ENCODE measurements at regions of chr17 and their contacts with region 1.

Region 1: GRCh38 chr17:69414408-69415274 is at the start of gene MAP2K6:
- DNase-seq: peak; percentile 65
- ATAC-seq: peak; percentile 90
- H3K4me3 ChIP-seq: peak within 1 kb of the TSS; percentile 51
- H3K27ac ChIP-seq: peak within 1 kb of the TSS; percentile 36
- H3K4me1 ChIP-seq: 0 out of 2 replicates have a peak, but pooled peaks cover 2% of the 10 kb centered on the region
- H3K27me3 ChIP-seq: no peaks in the 10 kb centered on the region
- CTCF ChIP-seq: no peak
- POLR2A ChIP-seq: no peak
- RAD21 ChIP-seq: no peak
- total RNA-seq, gene MAP2K6: 3.6 and 5.7 TPM in 2 replicates

Region 2: GRCh38 chr17:69473841-69474831 is 59.5 kb after region 1 on chr17:
- CTCF ChIA-PET with region 1: no interaction called
- POLR2A ChIA-PET with region 1: no interaction called
- dilution Hi-C with region 1: no loop called
- in situ Hi-C with region 1: no loop called
- intact Hi-C with region 1: loop called (anchors 5 kb)
- DNase-seq: peak; percentile 72
- ATAC-seq: peak; percentile 90
- H3K4me3 ChIP-seq: no peak overlapping the region
- H3K27ac ChIP-seq: no peak overlapping the region
- H3K4me1 ChIP-seq: peaks cover 3% of the 10 kb centered on the region; the same call in 1 of the 2 replicates
- H3K27me3 ChIP-seq: no peaks in the 10 kb centered on the region
- CTCF ChIP-seq: no peak
- POLR2A ChIP-seq: no peak
- RAD21 ChIP-seq: no peak

Region 3: DNA sequence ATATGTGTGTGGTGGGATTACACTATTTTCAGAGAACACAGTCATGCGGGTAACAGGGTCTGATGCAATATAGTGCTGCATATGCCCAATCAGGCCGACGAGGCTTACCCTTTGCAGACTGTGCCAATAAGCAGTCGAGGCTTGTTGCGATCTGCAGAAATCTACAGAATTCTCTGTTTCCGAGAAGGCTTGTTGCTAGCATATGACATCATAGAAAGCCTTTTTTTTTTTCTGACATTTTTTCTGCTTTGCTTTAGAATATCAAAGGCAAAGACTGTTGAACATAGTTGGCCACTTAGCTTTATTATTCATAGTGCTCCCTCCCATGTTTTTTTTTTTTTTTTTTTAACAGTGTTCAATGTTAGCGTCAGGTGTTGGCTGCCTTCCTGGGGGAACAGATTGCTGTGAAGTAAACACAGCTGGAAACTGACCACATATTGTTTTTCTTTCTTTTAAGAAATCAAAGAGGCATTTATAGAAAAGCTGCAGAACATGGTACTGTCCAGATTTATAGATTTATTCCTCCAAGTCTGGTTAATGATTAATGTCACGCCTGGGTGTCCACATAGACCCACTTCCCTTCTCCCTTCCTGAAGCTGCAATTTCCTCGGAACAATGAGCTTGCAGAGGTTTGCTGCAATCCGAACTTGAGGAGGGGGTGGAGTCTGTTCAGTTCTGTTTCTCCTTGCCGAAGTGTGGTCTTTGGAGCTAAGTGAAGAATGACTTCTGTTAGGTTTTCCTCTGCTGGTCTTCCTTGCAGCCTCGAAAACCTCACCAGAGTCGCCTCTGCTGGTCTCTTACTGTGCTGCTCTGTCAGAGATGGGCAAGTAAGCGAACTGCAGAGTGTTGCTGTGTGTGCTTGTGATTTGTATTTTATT is 87.2 kb after region 1 on chr17:
- CTCF ChIA-PET with region 1: no interaction called
- POLR2A ChIA-PET with region 1: no interaction called
- dilution Hi-C with region 1: no loop called
- in situ Hi-C with region 1: no loop called
- intact Hi-C with region 1: loop called (anchors 5 kb)
- DNase-seq: peak; percentile 90
- ATAC-seq: peak; percentile 72
- H3K4me3 ChIP-seq: peak overlapping the region; percentile 2; the same call in 1 of the 2 replicates
- H3K27ac ChIP-seq: peak overlapping the region; percentile 71; the same call in 1 of the 2 replicates
- H3K4me1 ChIP-seq: peaks cover 8% of the 10 kb centered on the region; the same call in 1 of the 2 replicates
- H3K27me3 ChIP-seq: no peaks in the 10 kb centered on the region
- CTCF ChIP-seq: no peak
- POLR2A ChIP-seq: no peak
- RAD21 ChIP-seq: no peak

Region 4: DNA sequence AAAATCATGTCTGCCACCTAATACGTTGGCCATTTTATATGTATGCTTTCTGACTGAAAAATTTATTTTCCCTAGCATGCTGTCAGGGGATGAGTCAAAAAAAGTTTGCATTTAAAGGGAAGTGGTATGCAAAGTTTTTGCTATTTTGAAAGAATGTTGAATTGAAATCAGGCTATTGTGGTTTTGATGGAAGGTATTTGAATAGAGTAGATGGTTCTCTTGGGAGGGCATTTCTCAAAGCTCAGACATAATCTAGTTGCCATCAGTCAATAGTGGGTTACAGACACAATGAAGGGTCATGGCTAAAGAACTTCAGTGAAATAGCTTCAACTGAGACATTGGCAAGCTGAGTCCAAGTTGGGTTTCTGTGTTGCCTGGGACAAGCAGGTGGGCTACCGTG is 102.3 kb after region 1 on chr17:
- CTCF ChIA-PET with region 1: no interaction called
- POLR2A ChIA-PET with region 1: no interaction called
- dilution Hi-C with region 1: no loop called
- in situ Hi-C with region 1: no loop called
- intact Hi-C with region 1: loop called (anchors 5 kb)
- DNase-seq: no peak
- ATAC-seq: no peak
- H3K4me3 ChIP-seq: no peak overlapping the region
- H3K27ac ChIP-seq: no peak overlapping the region
- H3K4me1 ChIP-seq: no peaks in the 10 kb centered on the region
- H3K27me3 ChIP-seq: no peaks in the 10 kb centered on the region
- CTCF ChIP-seq: no peak
- POLR2A ChIP-seq: no peak
- RAD21 ChIP-seq: no peak